RWPE1 (cell line): ENCODE measurements at regions of chr17 and their contacts with region 1.

Region 1: DNA sequence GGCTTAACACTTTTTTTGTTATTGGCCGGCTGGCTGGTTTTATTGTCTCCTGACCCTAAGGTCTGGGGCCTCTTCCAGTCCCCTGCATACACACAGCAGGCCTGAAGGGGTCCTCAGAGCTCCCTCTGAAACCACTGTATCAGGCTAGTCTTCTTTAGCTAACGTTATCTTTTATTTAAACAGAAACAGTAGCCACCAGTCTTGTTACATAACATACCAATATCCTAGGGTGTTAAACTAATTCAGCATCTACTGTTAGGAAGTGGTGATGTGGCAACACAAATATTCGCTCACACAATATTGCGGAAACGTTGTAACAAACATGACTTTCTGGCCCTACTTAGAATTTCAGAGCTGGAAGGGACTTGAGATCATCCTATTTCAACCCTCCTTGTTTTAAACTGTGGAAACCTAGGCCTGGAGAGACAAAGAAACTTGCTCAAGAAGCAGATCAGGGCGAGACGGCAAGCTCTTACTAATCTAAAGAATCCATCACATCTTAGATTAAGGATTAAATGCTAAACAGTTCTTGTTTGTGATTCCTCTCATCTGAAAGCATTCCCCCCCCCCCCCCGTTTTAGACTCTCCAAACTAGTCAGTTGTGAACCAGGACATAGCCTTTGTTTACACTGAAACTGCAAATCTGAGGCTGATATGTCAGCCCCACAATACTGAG is 1.7 kb upstream of the YPEL2 start:
- DNase-seq: peak; percentile 41
- H3K27ac ChIP-seq: peak overlapping the region; percentile 67; the same call in 1 of the 2 replicates
- CTCF ChIP-seq: peak; percentile 57

Region 2: DNA sequence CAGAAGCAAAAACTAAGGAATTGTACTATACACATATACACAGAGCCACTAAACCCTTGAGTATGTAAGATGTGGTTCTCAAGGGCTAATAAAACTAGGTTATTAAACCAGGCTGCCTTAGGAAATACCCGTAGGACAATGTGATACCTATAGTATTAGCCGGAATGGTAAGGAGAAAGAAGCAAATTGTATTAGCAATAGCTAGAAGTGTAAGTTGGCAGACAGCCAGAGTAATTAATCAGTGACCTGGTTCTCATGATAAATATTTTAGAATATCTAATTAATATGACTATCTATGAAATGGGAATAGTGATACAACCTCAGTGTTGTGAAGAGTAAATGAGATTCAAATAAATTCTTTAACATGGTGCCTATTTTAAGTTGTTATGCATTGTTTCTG is 90.9 kb before region 1 on chr17:
- CTCF ChIA-PET with region 1: no interaction called
- POLR2A ChIA-PET with region 1: no interaction called
- DNase-seq: no peak
- H3K27ac ChIP-seq: no peak overlapping the region
- CTCF ChIP-seq: no peak

Region 3: GRCh38 chr17:59296771-59297500 is 32.8 kb before region 1 on chr17:
- CTCF ChIA-PET with region 1: no interaction called
- POLR2A ChIA-PET with region 1: no interaction called
- DNase-seq: no peak
- H3K27ac ChIP-seq: no peak overlapping the region
- CTCF ChIP-seq: no peak

Region 4: DNA sequence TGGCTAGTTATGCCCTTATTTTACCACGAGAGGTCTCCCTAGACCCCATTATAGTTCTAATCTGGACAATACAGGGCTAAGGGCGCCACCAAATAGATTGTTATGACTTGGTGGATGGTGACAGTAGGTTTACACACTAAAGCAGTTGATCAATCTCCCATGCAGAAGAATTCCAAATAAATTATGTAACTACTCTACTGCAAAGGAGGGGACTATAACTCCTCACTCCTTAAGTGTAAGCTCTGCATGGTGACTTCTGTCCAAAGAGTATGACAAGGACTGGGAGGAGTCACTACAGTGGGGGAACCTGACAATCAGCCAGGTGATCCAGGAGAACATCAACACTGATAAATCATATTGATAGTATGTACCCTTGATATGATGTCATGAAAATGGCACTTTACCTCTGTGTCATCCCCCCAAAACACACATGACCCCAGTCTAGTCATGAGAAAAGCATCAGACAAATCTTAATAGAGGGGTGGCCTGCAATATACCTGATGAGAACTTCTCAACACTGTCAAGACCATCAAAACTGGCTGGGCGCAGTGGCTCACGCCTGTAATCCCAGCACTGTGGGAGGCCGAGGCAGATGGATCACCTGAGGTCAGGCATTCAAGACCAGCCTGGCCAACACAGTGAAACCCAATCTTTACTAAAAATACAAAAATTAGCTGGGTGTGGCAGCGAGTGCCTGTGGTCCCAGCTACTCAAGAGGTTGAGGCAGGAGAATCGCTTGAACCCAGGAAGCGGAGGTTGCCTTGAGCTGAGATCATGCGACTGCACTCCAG is 18.5 kb before region 1 on chr17:
- CTCF ChIA-PET with region 1: interaction called, 10 read pairs
- POLR2A ChIA-PET with region 1: no interaction called
- DNase-seq: peak; percentile 57
- H3K27ac ChIP-seq: no peak overlapping the region
- CTCF ChIP-seq: peak; percentile 88

Region 5: GRCh38 chr17:59440784-59441441 is 111.1 kb after region 1 on chr17:
- CTCF ChIA-PET with region 1: interaction called, 10 read pairs
- POLR2A ChIA-PET with region 1: interaction called, 3 read pairs
- DNase-seq: peak; percentile 77
- H3K27ac ChIP-seq: no peak overlapping the region
- CTCF ChIP-seq: peak; percentile 89

Region 6: DNA sequence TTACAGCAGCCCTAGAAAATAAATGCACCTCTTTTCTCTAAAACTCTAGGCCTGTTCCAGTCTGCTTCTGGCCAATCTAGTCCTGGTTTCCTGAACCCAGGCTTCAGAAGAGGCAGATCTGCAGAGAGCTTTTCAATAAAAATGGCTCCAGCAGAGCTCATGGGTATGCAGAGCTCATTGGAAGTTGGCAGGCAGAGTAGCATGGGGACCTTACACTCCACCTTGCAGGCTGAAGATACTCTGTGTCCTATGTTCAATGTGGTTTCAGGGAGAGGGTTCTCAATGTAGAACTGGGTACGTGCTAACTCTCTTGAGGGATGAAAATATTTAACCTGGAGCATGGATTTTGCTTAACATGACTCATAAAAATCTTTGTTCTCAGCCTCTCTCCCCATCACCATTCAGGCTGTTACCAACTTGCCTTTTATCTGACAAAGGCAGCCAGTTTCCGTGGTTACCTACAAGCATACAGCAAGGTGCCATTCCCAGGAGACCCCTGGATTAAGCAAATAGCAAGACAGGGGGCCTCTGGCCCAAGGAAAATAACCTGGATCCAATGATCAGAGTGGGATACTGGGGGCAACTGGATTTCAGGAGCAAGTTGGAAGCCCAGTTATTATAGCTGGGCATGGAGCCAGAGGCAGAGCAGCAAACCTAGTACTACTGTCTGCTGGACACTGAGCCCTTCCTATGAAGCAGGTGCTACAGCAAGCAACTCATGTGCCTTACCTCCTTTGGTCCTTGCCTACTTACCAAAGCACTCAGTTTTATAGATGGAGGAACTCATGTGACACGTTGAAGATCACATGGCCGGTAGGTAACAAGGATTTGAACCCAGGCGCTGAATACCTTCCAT is 137.4 kb after region 1 on chr17:
- CTCF ChIA-PET with region 1: interaction called, 11 read pairs
- POLR2A ChIA-PET with region 1: no interaction called
- DNase-seq: no peak
- H3K27ac ChIP-seq: no peak overlapping the region
- CTCF ChIP-seq: no peak